ENCODE measurements at regions of chr12 and their contacts with region 1.

Region 1: DNA sequence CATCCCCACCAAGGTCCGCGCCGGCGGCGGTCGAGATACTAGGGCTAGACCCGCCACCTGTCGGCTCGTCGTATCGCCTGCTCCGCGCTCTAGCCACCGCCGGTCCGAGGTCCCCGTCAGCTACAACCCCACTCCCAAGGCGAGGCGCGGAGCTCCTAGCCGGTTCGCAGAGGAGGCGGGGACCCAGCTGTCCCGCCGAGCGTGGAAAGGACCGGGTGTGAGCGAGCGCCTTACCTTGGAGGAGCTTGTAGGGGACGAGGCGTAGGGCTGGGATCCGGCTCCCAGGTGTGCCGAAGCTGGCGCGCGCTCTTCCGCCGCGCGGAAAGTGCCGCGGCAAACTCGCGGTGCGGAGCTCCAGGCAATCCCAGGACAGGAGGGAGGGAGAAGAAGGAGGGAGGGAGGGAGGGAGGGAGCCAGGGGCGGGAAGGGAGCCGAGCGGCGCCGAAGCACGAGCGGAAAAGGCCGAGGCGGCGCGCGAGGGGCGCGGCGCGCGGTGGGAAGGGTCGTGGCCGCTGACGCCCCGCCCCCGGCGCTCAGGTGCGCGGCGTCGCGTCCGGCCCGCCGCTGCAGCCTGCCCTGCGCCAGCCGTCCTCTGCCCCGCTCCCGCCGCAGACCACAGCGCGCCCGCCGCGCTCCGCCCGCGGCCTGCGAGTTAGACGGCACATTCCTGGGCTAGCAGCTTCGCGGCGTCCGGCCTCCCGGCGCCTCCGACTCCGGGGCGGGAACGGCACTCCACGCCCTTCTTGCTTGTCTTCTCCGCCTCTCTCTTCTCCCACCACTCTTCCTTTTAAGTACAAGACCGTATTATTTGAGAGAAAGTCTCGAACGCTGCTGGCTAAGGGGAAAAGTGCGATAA is at the start of gene PAWR:
- DNase-seq: peak; percentile 83
- H3K4me3 ChIP-seq: peak within 1 kb of the TSS; percentile 85 to 96 (median 88)
- H3K27ac ChIP-seq: peak within 1 kb of the TSS; percentile 85
- H3K4me1 ChIP-seq: peaks cover 28% of the 10 kb centered on the region
- H3K27me3 ChIP-seq: no peaks in the 10 kb centered on the region
- CTCF ChIP-seq: peak in 1 of 2 donors; percentile 37
- POLR2A ChIP-seq: peak; percentile 21
- total RNA-seq, gene PAWR: 154 and 175 TPM in 2 replicates

Region 2: GRCh38 chr12:79555028-79555930 is 135.6 kb before region 1 on chr12:
- CTCF ChIA-PET with region 1: interaction called, 3 read pairs
- POLR2A ChIA-PET with region 1: no interaction called
- dilution Hi-C with region 1: no loop called
- intact Hi-C with region 1: loop called (anchors 1 kb)
- DNase-seq: peak; percentile 79
- H3K4me3 ChIP-seq: no peak overlapping the region
- H3K27ac ChIP-seq: no peak overlapping the region
- H3K4me1 ChIP-seq: peaks cover 56% of the 10 kb centered on the region
- H3K27me3 ChIP-seq: no peaks in the 10 kb centered on the region
- CTCF ChIP-seq: peak; percentile 43 to 48
- POLR2A ChIP-seq: no peak

Region 3: DNA sequence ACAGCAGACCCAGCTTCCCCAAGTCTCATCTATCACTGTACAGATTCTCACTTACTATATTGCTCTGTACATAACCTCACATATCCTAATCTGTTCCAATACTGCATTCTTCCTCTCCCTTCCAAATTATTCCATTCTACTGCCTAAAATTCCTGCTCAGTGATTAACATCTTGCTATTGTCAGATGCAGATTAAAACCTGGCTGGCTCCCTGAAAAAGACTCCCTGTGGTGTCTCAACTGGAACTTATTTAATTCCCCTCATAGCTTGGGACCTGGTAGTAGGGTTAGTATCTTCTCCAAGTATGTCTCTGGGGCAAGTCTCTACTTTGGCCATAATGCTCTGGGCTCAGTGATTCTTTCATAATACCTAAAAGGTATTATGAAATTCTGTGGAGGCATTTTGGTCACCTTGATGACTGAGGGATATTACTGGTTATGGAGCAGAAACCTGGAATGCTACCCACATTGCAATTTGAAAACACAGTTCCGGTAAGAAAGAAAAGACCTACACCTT is 55.9 kb before region 1 on chr12:
- CTCF ChIA-PET with region 1: no interaction called
- POLR2A ChIA-PET with region 1: no interaction called
- dilution Hi-C with region 1: no loop called
- intact Hi-C with region 1: no loop called
- DNase-seq: no peak
- H3K4me3 ChIP-seq: no peak overlapping the region
- H3K27ac ChIP-seq: no peak overlapping the region
- H3K4me1 ChIP-seq: no peaks in the 10 kb centered on the region
- H3K27me3 ChIP-seq: no peaks in the 10 kb centered on the region
- CTCF ChIP-seq: no peak
- POLR2A ChIP-seq: no peak

Region 4: DNA sequence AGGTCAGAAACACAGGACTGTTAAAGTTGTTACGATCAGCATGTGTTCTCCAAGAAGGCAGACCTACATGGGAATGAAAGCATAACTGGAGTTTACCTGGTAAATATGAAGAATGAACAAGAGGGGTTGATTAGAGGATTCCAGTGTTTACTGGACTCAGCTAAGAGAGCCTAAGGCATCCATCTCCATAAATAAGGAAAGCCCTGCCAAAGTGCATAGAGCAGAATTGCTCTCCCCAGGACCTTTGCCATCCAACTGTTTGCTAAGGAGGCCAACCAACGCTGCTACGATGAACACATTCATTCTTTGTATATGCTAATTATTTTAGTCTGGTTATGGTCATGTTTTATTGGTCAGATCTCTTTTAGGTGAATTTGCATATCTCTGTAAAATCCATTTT is 17.0 kb after region 1 on chr12:
- CTCF ChIA-PET with region 1: no interaction called
- POLR2A ChIA-PET with region 1: no interaction called
- dilution Hi-C with region 1: no loop called
- intact Hi-C with region 1: no loop called
- DNase-seq: no peak
- H3K4me3 ChIP-seq: no peak overlapping the region
- H3K27ac ChIP-seq: no peak overlapping the region
- H3K4me1 ChIP-seq: no peaks in the 10 kb centered on the region
- H3K27me3 ChIP-seq: peaks cover 0 to 2% of the 10 kb centered on the region in 2 experiments
- CTCF ChIP-seq: no peak
- POLR2A ChIP-seq: no peak

Region 5: GRCh38 chr12:79737875-79738718 is 47.2 kb after region 1 on chr12:
- CTCF ChIA-PET with region 1: interaction called, 6 read pairs
- POLR2A ChIA-PET with region 1: no interaction called
- dilution Hi-C with region 1: no loop called
- intact Hi-C with region 1: loop called (anchors 1 kb)
- DNase-seq: peak; percentile 80
- H3K4me3 ChIP-seq: no peak overlapping the region
- H3K27ac ChIP-seq: no peak overlapping the region
- H3K4me1 ChIP-seq: no peaks in the 10 kb centered on the region
- H3K27me3 ChIP-seq: no peaks in the 10 kb centered on the region
- CTCF ChIP-seq: peak; percentile 48 to 49
- POLR2A ChIP-seq: no peak